Activated B cell treated with CpG ODN at 0.5 μM for 24 hours (primary cell): ENCODE measurements at regions of chr5 and their contacts with region 1.

Region 1: DNA sequence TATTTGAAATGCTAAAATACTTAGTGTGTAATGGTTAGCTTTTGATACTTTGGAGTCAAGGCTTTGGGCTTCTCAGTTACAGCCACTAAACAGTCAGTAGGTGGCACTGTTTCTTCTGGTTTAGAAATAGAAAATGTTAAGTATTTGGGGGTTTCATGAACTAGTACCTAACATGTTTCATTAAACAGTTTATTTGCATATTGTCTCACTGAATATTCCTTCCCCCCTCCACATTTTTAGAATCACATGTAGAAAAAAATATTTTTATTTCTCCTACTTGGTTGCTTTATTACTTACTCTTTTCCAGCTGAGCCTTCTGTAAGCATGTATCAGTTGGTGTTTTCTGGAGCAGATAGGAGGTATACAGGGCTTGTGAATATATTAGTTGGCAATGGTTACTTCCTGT is 48.0 kb downstream of the IPO11 start:
- DNase-seq: no peak
- ATAC-seq: peak; percentile 31
- H3K4me3 Mint-ChIP-seq: no peak overlapping the region
- H3K27ac Mint-ChIP-seq: no peak overlapping the region
- H3K4me1 Mint-ChIP-seq: peaks cover 2% of the 10 kb centered on the region
- H3K27me3 Mint-ChIP-seq: no peaks in the 10 kb centered on the region
- CTCF ChIP-seq: no peak

Region 2: GRCh38 chr5:62489471-62489870 is 28.9 kb after region 1 on chr5:
- CTCF ChIA-PET with region 1: no interaction called
- POLR2A ChIA-PET with region 1: no interaction called
- intact Hi-C with region 1: no loop called
- DNase-seq: no peak
- ATAC-seq: no peak
- H3K4me3 Mint-ChIP-seq: no peak overlapping the region
- H3K27ac Mint-ChIP-seq: no peak overlapping the region
- H3K4me1 Mint-ChIP-seq: peaks cover under 1% of the 10 kb centered on the region
- H3K27me3 Mint-ChIP-seq: no peaks in the 10 kb centered on the region
- CTCF ChIP-seq: no peak

Region 3: DNA sequence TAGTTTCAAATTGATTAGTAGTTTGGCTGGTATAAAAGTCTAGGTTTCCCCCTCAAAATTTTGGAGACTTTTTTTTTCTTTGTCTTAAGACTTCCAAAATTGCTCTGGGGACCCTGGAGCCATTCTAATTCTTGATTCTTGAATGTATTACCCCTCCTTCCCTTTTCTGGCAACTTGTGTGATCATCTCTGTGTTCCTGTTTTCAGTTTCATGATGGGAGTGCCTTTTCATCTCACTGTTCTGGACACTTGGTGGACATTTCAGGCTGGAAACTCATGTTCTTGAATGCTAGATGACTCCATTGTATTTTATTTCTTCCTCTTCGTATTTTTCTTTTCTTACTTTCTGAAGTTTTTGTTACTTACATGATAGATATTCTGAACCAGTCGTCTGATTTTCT is 60.7 kb after region 1 on chr5:
- CTCF ChIA-PET with region 1: no interaction called
- POLR2A ChIA-PET with region 1: no interaction called
- intact Hi-C with region 1: no loop called
- DNase-seq: no peak
- ATAC-seq: no peak
- H3K4me3 Mint-ChIP-seq: no peak overlapping the region
- H3K27ac Mint-ChIP-seq: no peak overlapping the region
- H3K4me1 Mint-ChIP-seq: peaks cover 9% of the 10 kb centered on the region
- H3K27me3 Mint-ChIP-seq: no peaks in the 10 kb centered on the region
- CTCF ChIP-seq: no peak

Region 4: GRCh38 chr5:63963080-63963735 is 1502.6 kb after region 1 on chr5:
- CTCF ChIA-PET with region 1: no interaction called
- POLR2A ChIA-PET with region 1: no interaction called
- intact Hi-C with region 1: loop called (anchors 5 kb)
- DNase-seq: no peak
- ATAC-seq: no peak
- H3K4me3 Mint-ChIP-seq: no peak overlapping the region
- H3K27ac Mint-ChIP-seq: no peak overlapping the region
- H3K4me1 Mint-ChIP-seq: no peaks in the 10 kb centered on the region
- H3K27me3 Mint-ChIP-seq: peaks cover 26% of the 10 kb centered on the region
- CTCF ChIP-seq: no peak